B cell (primary cell): ENCODE measurements at regions of chr1 and their contacts with region 1.

Region 1: DNA sequence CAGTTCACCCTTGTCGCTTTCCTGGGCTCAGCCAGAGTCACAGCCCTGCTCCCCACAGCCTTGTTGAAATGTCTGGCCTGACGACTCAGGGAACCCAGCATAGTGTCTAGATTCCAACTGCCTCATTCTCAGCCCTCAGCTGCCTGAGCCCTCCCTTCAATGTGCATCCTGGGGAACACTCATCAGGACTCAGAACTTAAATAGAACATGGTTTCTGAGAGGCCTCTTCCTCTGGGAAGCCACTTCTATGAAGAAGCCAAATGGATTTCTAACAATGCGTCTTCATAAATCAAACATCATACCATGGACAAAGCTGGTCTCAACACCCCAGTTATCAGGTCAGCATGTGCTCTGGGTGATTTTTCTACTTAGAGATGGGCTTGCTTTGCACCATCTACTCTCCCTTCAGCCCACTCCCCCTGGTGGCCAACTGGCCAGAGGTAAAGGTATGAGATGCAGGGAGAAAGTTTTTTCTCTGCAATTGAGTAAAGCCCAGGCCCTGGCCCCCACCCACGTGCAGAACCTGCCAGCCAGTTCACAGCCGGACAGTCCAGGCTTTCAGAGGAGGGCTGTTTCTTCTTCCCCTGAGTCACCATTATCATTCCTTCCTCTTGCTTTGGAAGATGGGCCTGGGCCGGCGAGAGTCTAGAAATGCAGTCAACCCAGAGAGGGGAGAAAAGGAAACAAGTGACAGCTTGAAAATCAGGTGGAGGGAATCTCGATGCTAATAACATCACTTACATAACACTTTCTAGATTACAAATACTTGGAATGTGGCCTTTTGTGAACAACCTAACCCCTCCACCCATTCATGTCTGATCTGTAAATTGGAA is 32.1 kb downstream of the CD244 start:
- DNase-seq: peak; percentile 84
- ATAC-seq: peak; percentile 74
- H3K4me3 ChIP-seq: no peak overlapping the region
- H3K4me3 Mint-ChIP-seq: no peak overlapping the region
- H3K27ac ChIP-seq: peak overlapping the region in 1 of 2 donors; percentile 14
- H3K27ac Mint-ChIP-seq: peak overlapping the region; percentile 77
- H3K4me1 ChIP-seq: no peaks in the 10 kb centered on the region
- H3K4me1 Mint-ChIP-seq: peaks cover 10% of the 10 kb centered on the region
- H3K27me3 ChIP-seq: no peaks in the 10 kb centered on the region
- H3K27me3 Mint-ChIP-seq: no peaks in the 10 kb centered on the region
- CTCF ChIP-seq: peak; percentile 83

Region 2: DNA sequence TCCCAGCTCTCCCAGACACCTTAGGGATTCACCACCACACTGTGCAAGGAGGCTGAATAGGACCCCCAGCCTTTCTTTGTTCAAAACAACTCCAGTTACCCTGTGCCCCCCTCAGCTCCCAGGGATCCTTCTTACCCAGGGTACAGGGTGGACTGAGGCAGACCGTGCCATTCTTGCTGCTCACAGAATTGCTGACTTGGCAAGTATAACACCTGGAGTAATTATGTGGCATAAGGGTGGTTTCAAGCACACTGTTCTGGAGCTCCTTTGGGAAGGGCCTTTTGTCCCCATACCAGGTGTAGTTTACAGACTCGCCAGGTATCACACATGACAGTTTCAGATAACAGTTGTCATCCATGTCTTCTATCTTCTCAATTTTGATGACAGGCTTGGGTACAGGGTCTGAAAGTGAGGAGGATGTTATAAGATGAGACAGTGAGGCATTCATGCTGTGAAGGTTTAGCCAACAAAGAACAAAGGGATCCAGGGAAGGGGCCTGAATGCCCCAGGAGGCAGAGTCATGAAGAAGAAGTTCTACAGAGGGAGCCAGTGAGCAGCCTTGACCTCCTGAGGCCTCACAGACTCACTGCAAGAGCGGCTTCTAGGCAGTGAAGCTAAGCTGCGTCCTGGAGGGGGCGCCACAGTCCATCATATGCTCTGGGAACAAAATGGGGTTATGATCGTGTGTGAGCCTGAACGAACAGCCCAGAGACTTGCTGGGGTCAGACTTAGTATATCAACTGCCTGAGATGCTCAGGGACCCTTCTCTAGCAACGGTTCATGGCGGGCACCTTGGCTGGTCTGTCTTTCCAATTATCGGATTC is 149.3 kb before region 1 on chr1:
- CTCF ChIA-PET with region 1: interaction called, 6 read pairs
- POLR2A ChIA-PET with region 1: no interaction called
- intact Hi-C with region 1: loop called (anchors 1 kb)
- DNase-seq: peak; percentile 89
- ATAC-seq: peak; percentile 93
- H3K4me3 ChIP-seq: no peak overlapping the region
- H3K4me3 Mint-ChIP-seq: no peak overlapping the region
- H3K27ac ChIP-seq: peak overlapping the region in 1 of 2 donors; percentile 82
- H3K27ac Mint-ChIP-seq: peak overlapping the region; percentile 72
- H3K4me1 ChIP-seq: peaks cover 38 to 45% of the 10 kb centered on the region in 2 donors
- H3K4me1 Mint-ChIP-seq: peaks cover 51% of the 10 kb centered on the region
- H3K27me3 ChIP-seq: no peaks in the 10 kb centered on the region
- H3K27me3 Mint-ChIP-seq: no peaks in the 10 kb centered on the region
- CTCF ChIP-seq: peak; percentile 92

Region 3: GRCh38 chr1:160748181-160748877 is 82.2 kb before region 1 on chr1:
- CTCF ChIA-PET with region 1: interaction called, 14 read pairs
- POLR2A ChIA-PET with region 1: no interaction called
- intact Hi-C with region 1: no loop called
- DNase-seq: no peak
- ATAC-seq: no peak
- H3K4me3 ChIP-seq: no peak overlapping the region
- H3K4me3 Mint-ChIP-seq: no peak overlapping the region
- H3K27ac ChIP-seq: no peak overlapping the region
- H3K27ac Mint-ChIP-seq: no peak overlapping the region
- H3K4me1 ChIP-seq: peaks cover 8 to 11% of the 10 kb centered on the region in 2 donors
- H3K4me1 Mint-ChIP-seq: peaks cover 30% of the 10 kb centered on the region
- H3K27me3 ChIP-seq: no peaks in the 10 kb centered on the region
- H3K27me3 Mint-ChIP-seq: no peaks in the 10 kb centered on the region
- CTCF ChIP-seq: peak; percentile 30

Region 4: GRCh38 chr1:160806109-160806665 is 24.4 kb before region 1 on chr1:
- CTCF ChIA-PET with region 1: interaction called, 13 read pairs
- POLR2A ChIA-PET with region 1: no interaction called
- intact Hi-C with region 1: no loop called
- DNase-seq: no peak
- ATAC-seq: no peak
- H3K4me3 ChIP-seq: no peak overlapping the region
- H3K4me3 Mint-ChIP-seq: peak overlapping the region; percentile 74
- H3K27ac ChIP-seq: peak overlapping the region in 1 of 2 donors; percentile 20
- H3K27ac Mint-ChIP-seq: peak overlapping the region; percentile 60
- H3K4me1 ChIP-seq: peaks cover 9 to 13% of the 10 kb centered on the region in 2 donors
- H3K4me1 Mint-ChIP-seq: peaks cover 74% of the 10 kb centered on the region
- H3K27me3 ChIP-seq: no peaks in the 10 kb centered on the region
- H3K27me3 Mint-ChIP-seq: no peaks in the 10 kb centered on the region
- CTCF ChIP-seq: no peak

Region 5: DNA sequence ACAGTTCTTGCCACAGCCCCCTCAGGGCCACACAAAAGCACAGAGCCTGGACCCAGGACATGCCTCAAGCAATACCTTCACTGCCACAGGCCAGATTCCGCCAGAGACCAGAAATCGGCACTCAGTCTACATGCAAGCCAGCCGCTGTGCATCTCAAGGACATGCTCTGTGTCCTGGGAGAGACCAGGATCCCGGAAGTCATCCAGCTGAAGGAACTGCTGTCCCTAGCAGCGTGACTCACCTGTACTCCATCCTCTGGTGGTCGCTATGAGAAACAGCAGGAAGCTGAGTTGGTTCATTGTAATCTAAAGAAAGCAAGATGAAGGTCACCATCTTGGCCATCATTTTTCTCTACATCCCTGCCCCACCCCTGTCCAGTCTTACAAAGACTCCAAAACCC is 54.0 kb after region 1 on chr1:
- CTCF ChIA-PET with region 1: no interaction called
- POLR2A ChIA-PET with region 1: no interaction called
- intact Hi-C with region 1: loop called (anchors 10 kb)
- DNase-seq: no peak
- ATAC-seq: no peak
- H3K4me3 ChIP-seq: no peak overlapping the region
- H3K4me3 Mint-ChIP-seq: no peak overlapping the region
- H3K27ac ChIP-seq: no peak overlapping the region
- H3K27ac Mint-ChIP-seq: no peak overlapping the region
- H3K4me1 ChIP-seq: no peaks in the 10 kb centered on the region
- H3K4me1 Mint-ChIP-seq: no peaks in the 10 kb centered on the region
- H3K27me3 ChIP-seq: no peaks in the 10 kb centered on the region
- H3K27me3 Mint-ChIP-seq: peaks cover 7% of the 10 kb centered on the region
- CTCF ChIP-seq: peak; percentile 21